ENCODE measurements at regions of chr5 and their contacts with region 1.

Region 1: DNA sequence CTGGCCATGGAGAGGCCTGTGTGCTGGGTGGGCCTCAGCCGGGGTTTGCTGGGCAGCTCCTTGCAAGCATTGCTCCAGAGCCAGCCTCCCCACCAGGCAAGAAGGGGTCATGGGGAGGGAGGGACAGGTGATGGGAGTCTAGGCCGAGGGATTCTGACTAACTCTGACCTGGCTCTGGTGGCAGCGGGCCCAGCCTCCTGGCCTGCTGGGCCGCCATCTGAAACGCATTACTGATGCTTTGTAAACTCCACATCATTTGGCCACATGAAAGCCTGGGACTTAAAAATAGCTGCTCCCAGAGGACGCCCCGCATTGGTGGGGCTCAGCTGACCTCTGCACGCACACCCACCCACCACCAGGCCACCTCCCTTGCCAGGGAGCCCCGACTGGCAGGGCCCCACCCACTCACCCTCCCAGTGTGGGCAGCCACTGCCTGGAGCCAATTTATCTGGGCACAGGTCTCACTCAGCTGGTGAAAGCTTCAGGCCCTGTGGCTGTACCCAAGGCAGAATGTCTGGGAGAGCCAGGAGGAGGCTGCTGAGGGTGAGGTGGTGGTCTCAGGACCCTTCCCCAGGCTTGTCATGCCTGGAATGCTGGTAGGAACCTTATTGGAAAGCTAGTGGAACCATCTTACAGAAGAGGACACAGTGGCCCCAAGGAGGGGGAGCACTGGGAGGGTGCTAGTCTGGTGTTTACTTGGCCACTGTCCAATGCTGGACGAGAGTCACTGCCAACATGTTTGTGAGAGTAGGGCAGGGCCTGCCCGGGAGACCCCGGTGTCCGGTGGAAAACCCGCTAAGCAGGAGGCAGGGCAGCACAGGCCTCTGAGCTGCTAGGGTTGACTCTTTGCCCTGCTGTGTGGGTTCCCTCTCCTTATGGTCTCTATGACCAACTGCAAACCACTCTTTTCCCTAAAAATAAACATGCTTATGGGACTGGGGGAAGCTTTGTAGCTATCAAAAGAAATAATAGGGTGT is 10.8 kb downstream of the TCF7 start:
- DNase-seq: peak; percentile 83
- H3K4me3 ChIP-seq: no peak overlapping the region
- H3K27ac ChIP-seq: peak overlapping the region; percentile 13
- H3K4me1 ChIP-seq: peaks cover 46% of the 10 kb centered on the region
- H3K27me3 ChIP-seq: no peaks in the 10 kb centered on the region
- CTCF ChIP-seq: no peak

Region 2: GRCh38 chr5:133801955-133802751 is 323.2 kb before region 1 on chr5:
- CTCF ChIA-PET with region 1: no interaction called
- dilution Hi-C with region 1: no loop called
- in situ Hi-C with region 1: no loop called
- intact Hi-C with region 1: no loop called
- DNase-seq: no peak
- H3K4me3 ChIP-seq: no peak overlapping the region
- H3K27ac ChIP-seq: no peak overlapping the region
- H3K4me1 ChIP-seq: no peaks in the 10 kb centered on the region
- H3K27me3 ChIP-seq: peaks cover 4% of the 10 kb centered on the region
- CTCF ChIP-seq: no peak

Region 3: GRCh38 chr5:133985540-133986180 is 139.7 kb before region 1 on chr5:
- CTCF ChIA-PET with region 1: no interaction called
- dilution Hi-C with region 1: loop called (anchors 5 kb)
- in situ Hi-C with region 1: no loop called
- intact Hi-C with region 1: no loop called
- DNase-seq: no peak
- H3K4me3 ChIP-seq: no peak overlapping the region
- H3K27ac ChIP-seq: no peak overlapping the region
- H3K4me1 ChIP-seq: no peaks in the 10 kb centered on the region
- H3K27me3 ChIP-seq: no peaks in the 10 kb centered on the region
- CTCF ChIP-seq: no peak

Region 4: DNA sequence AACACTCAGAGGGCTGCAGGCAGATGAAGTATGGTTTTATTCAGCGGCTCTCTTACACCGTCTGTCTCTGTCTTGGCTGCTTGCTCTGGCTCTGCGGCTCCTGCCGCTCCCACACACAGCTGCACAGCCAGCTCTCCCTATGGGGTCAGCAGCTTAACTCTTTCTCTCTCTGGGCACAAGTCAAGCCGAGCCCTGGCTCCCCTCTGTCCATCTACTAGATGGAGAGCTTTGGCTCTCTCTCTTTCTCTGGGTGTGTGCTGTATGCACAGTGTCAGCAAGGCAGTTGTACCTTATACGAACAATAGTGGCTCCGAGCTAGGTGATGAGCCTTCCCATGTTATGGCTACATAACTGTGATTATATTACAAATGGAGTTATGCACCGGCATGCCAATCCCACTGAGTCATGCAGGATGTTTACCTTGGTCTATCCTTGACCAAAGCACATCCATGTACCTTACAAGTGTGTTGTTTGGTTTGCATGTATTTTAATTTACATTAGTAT is 119.8 kb after region 1 on chr5:
- CTCF ChIA-PET with region 1: no interaction called
- dilution Hi-C with region 1: no loop called
- in situ Hi-C with region 1: no loop called
- intact Hi-C with region 1: no loop called
- DNase-seq: peak; percentile 82
- H3K4me3 ChIP-seq: peak overlapping the region; percentile 26 to 40 (median 27)
- H3K27ac ChIP-seq: peak overlapping the region; percentile 85
- H3K4me1 ChIP-seq: peaks cover 49% of the 10 kb centered on the region
- H3K27me3 ChIP-seq: no peaks in the 10 kb centered on the region
- CTCF ChIP-seq: no peak

Measured in mammary epithelial cell (primary cell).